HCT116 (cell line): ENCODE measurements at regions of chr20 and their contacts with region 1.

Region 1: GRCh38 chr20:10434832-10435812 is at the start of gene SLX4IP:
- DNase-seq: peak; percentile 97
- ATAC-seq: peak; percentile 75
- H3K4me3 ChIP-seq: peak within 1 kb of the TSS; percentile 63 to 96
- H3K27ac ChIP-seq: peak within 1 kb of the TSS; percentile 86
- H3K4me1 ChIP-seq: peaks cover 5 to 28% of the 10 kb centered on the region in 2 experiments
- H3K27me3 ChIP-seq: no peaks in the 10 kb centered on the region
- CTCF ChIP-seq: no peak
- POLR2A ChIP-seq: peak; percentile 78
- RAD21 ChIP-seq: 0 out of 2 replicates have a peak, but pooled peaks have one; percentile 5
- total RNA-seq, gene SLX4IP: 11.1 TPM

Region 2: DNA sequence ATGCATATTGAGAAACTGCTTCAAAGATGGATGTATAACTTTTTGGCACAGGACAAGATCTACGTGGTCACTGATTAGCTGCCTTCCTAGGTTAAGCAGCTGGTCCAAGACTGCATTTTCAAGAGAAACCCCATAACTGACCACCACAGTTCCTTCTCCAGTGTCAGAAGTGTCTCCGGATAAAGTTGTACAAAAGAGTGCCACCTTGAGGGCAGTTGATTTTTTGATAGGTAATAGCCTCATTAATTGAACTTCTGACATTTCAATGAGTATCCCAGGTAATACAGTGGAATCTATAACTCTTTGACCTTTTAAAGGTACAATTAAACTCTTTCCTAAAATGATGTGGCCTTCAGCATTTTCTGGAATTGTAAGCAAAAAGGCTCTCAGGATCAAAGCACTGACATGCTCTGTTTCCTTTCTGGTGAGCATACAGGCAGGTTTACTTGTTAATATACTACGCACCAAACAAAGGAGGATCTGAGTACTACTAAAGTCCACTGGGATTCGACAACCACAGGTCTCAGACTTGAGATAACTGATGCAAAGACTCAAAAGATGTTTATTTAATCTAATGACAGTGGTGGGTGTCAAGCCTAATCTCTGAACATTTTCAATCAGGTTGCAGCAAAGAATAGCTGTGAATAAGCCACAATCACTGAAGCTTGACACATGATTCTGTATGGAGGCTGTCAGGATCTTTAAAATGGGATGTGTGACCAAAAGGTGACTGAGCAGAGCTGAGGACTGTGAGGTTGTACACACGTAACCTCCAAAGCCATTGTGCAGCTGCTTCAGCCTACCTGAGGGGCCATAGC is 22.3 kb before region 1 on chr20:
- CTCF ChIA-PET with region 1: no interaction called
- POLR2A ChIA-PET with region 1: interaction called, 11 read pairs
- RAD21 ChIA-PET with region 1: no interaction called
- intact Hi-C with region 1: no loop called
- DNase-seq: no peak
- ATAC-seq: peak; percentile 57; the same call in 1 of the 2 replicates
- H3K4me3 ChIP-seq: no peak overlapping the region
- H3K27ac ChIP-seq: no peak overlapping the region
- H3K4me1 ChIP-seq: peaks cover 8 to 13% of the 10 kb centered on the region in 2 experiments; a peak in 3 of 4 replicates
- H3K27me3 ChIP-seq: no peaks in the 10 kb centered on the region
- CTCF ChIP-seq: peak in 2 of 3 experiments; percentile 29 to 40; a peak in 3 of 6 replicates
- POLR2A ChIP-seq: no peak
- RAD21 ChIP-seq: 0 out of 2 replicates have a peak, but pooled peaks have one; percentile 22

Region 3: GRCh38 chr20:10511509-10512251 is 76.6 kb after region 1 on chr20:
- CTCF ChIA-PET with region 1: no interaction called
- POLR2A ChIA-PET with region 1: interaction called, 5 read pairs
- RAD21 ChIA-PET with region 1: no interaction called
- intact Hi-C with region 1: loop called (anchors 5 kb)
- DNase-seq: peak; percentile 87
- ATAC-seq: peak; percentile 78
- H3K4me3 ChIP-seq: peak overlapping the region; percentile 3 to 25; a peak in 2 of 4 replicates
- H3K27ac ChIP-seq: peak overlapping the region; percentile 86
- H3K4me1 ChIP-seq: peaks cover 65 to 72% of the 10 kb centered on the region in 2 experiments
- H3K27me3 ChIP-seq: no peaks in the 10 kb centered on the region
- CTCF ChIP-seq: no peak
- POLR2A ChIP-seq: no peak
- RAD21 ChIP-seq: 0 out of 2 replicates have a peak, but pooled peaks have one; percentile 0

Region 4: GRCh38 chr20:10536531-10536930 is 101.4 kb after region 1 on chr20:
- CTCF ChIA-PET with region 1: interaction called, 6 read pairs
- POLR2A ChIA-PET with region 1: interaction called, 8 read pairs
- RAD21 ChIA-PET with region 1: no interaction called
- intact Hi-C with region 1: loop called (anchors 2 kb)
- DNase-seq: no peak
- ATAC-seq: peak; percentile 28; the same call in 1 of the 2 replicates
- H3K4me3 ChIP-seq: no peak overlapping the region
- H3K27ac ChIP-seq: no peak overlapping the region
- H3K4me1 ChIP-seq: peaks cover 54 to 60% of the 10 kb centered on the region in 2 experiments
- H3K27me3 ChIP-seq: no peaks in the 10 kb centered on the region
- CTCF ChIP-seq: peak; percentile 45 to 51 (median 49); a peak in 5 of 6 replicates
- POLR2A ChIP-seq: no peak
- RAD21 ChIP-seq: peak; percentile 78

Region 5: DNA sequence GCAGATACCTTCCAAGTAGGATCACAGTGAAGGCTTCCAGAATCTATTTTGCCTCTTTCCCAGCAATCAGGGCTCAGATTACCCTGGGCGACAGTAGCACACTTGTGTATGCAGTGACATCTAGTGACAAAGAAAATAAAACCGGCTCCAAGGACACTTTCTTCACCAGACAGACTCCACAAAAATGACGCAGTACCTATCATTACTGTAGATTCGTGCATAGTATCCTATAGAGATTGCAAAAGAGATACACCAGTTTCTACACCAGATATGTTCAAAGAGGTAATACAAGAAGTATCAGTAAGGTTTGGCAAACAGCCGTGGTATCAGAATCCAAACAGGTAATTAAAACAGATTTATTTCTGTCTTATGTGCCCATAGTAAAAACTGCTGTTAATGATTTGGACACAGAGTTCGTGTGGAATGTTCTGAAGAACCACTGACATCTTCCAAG is 839.0 kb after region 1 on chr20:
- CTCF ChIA-PET with region 1: no interaction called
- POLR2A ChIA-PET with region 1: no interaction called
- RAD21 ChIA-PET with region 1: no interaction called
- intact Hi-C with region 1: loop called (anchors 10 kb)
- DNase-seq: peak; percentile 52
- ATAC-seq: peak; percentile 94
- H3K4me3 ChIP-seq: no peak overlapping the region
- H3K27ac ChIP-seq: no peak overlapping the region
- H3K4me1 ChIP-seq: peaks cover 11 to 19% of the 10 kb centered on the region in 2 experiments; a peak in 2 of 4 replicates
- H3K27me3 ChIP-seq: no peaks in the 10 kb centered on the region
- CTCF ChIP-seq: peak; percentile 51 to 78 (median 62); a peak in 5 of 6 replicates
- POLR2A ChIP-seq: no peak
- RAD21 ChIP-seq: peak; percentile 93